ENCODE measurements at regions of chr12 and their contacts with region 1.

Region 1: DNA sequence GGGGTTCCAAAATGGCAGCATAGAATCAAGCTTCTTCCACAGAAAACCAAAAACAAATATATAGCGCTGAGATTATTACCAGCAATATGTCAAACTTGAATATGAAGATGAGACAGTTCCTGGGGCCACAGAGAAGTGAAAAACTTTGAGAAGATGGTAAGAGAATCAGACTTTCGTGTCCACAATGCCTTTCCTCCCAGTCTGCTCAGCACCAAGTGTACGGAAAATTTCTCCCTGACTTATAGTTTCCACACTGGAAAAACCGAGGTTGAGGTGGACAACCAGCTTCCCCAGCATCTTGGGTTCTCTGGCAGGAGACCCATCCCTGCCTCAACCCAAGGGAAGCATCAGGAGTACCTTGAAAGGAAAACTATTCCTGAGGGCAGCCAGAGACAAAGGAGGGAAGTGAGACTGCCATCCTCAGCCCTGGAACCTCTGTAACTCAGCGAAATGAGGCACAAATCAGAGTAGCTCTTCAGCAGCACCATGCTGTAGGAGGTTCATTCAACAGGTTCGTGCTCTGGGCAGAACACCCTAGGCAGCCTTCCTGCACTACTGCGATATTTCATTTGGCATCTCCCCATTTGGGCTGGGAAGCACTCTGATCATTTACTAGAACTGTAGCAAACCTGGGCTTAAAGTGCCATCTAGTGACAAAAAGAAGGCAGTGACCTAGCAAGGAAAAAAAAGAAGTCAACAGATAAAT is 52.4 kb upstream of the CAPRIN2 start:
- DNase-seq: peak; percentile 86
- H3K4me3 ChIP-seq: no peak overlapping the region
- H3K27ac ChIP-seq: no peak overlapping the region
- H3K4me1 ChIP-seq: no peaks in the 10 kb centered on the region
- H3K27me3 ChIP-seq: no peaks in the 10 kb centered on the region
- CTCF ChIP-seq: peak; percentile 86

Region 2: DNA sequence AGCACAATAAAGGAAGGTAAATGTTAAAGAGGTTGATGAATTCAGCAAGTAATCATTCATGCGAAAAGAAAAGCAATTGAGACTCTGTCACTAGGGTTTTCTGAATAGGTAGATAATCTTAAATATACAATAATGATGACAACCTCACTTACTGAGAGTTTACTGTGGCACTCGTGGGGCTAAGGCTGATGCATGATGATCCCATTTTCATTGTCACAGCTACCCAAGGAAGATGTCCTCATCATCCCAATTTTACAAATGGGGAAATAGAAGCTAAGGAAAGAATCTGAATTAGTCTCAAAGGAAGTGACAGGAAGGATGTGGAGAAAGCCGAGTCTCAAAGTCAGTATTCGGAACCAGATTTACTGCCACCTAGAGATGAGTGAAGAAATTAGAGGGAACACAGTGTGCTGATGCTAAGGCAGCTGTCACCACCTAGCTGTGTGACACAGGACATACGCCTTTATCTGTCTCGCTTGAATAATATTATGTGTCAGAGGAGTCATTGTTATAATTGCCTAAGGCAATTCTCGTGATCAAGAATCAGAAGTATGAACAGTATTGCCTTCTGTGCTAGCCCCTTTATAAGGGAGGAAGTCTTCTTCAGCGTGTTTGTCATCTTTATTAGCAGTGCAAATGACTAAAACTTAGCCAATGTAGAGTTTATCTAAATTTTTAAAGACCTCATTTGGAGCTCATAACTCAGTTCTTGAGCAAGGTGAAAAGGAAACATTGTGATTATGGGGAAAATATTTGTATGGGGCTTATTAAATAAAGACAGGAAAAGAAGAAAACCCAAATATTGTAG is 1489.4 kb before region 1 on chr12:
- CTCF ChIA-PET with region 1: no interaction called
- POLR2A ChIA-PET with region 1: no interaction called
- intact Hi-C with region 1: loop called (anchors 10 kb)
- DNase-seq: peak; percentile 84
- H3K4me3 ChIP-seq: no peak overlapping the region
- H3K27ac ChIP-seq: no peak overlapping the region
- H3K4me1 ChIP-seq: peaks cover 6% of the 10 kb centered on the region
- H3K27me3 ChIP-seq: no peaks in the 10 kb centered on the region
- CTCF ChIP-seq: peak; percentile 97

Region 3: GRCh38 chr12:29519585-29520182 is 1287.5 kb before region 1 on chr12:
- CTCF ChIA-PET with region 1: no interaction called
- POLR2A ChIA-PET with region 1: no interaction called
- intact Hi-C with region 1: loop called (anchors 2 kb)
- DNase-seq: peak; percentile 66
- H3K4me3 ChIP-seq: no peak overlapping the region
- H3K27ac ChIP-seq: no peak overlapping the region
- H3K4me1 ChIP-seq: no peaks in the 10 kb centered on the region
- H3K27me3 ChIP-seq: no peaks in the 10 kb centered on the region
- CTCF ChIP-seq: peak; percentile 71

Region 4: GRCh38 chr12:30286345-30286926 is 520.7 kb before region 1 on chr12:
- CTCF ChIA-PET with region 1: no interaction called
- POLR2A ChIA-PET with region 1: no interaction called
- intact Hi-C with region 1: loop called (anchors 10 kb)
- DNase-seq: peak; percentile 59
- H3K4me3 ChIP-seq: no peak overlapping the region
- H3K27ac ChIP-seq: no peak overlapping the region
- H3K4me1 ChIP-seq: no peaks in the 10 kb centered on the region
- H3K27me3 ChIP-seq: peaks cover 8% of the 10 kb centered on the region
- CTCF ChIP-seq: peak; percentile 71

Region 5: DNA sequence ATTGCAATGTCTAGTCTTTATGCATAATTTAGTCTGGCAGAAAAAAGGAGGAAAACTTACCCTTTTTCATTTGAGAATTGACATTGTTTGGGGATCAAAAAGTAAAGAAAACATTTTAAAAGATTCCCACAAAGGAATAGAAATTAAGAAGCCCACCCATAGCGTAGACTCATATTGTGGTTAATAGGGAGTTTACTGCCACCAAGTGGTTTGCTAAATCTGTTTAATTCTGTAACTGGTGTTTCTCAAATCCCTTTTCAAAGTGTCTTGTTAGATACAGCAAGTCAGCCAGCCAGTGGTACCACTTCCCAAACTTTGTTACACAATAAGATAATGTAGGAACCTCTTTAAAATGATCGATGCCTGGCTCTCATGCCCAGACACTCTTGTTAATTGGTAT is 291.8 kb before region 1 on chr12:
- CTCF ChIA-PET with region 1: no interaction called
- POLR2A ChIA-PET with region 1: no interaction called
- intact Hi-C with region 1: loop called (anchors 5 kb)
- DNase-seq: peak; percentile 47
- H3K4me3 ChIP-seq: no peak overlapping the region
- H3K27ac ChIP-seq: no peak overlapping the region
- H3K4me1 ChIP-seq: peaks cover 10% of the 10 kb centered on the region
- H3K27me3 ChIP-seq: no peaks in the 10 kb centered on the region
- CTCF ChIP-seq: peak; percentile 58

Region 6: DNA sequence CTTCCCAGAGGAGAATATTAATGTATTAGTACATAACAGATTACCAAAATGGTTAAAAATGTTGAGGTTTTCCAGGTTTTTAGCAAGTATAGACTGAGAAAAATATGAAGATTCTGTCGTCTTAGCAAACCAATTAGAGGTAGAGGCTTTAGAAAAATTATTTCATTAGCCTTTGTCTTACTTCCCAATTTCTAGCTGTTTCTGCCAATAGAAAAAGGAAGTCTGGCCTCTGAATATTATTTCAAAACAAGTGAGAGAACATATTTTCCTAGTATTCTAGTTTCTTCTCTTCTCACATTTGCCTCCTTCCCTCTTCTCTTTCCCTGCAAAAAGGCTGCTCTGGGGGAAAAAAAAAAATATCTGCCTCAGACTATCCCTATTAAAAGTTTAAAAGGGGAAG is 127.9 kb before region 1 on chr12:
- CTCF ChIA-PET with region 1: no interaction called
- POLR2A ChIA-PET with region 1: no interaction called
- intact Hi-C with region 1: no loop called
- DNase-seq: no peak
- H3K4me3 ChIP-seq: no peak overlapping the region
- H3K27ac ChIP-seq: no peak overlapping the region
- H3K4me1 ChIP-seq: no peaks in the 10 kb centered on the region
- H3K27me3 ChIP-seq: no peaks in the 10 kb centered on the region
- CTCF ChIP-seq: no peak

Region 7: DNA sequence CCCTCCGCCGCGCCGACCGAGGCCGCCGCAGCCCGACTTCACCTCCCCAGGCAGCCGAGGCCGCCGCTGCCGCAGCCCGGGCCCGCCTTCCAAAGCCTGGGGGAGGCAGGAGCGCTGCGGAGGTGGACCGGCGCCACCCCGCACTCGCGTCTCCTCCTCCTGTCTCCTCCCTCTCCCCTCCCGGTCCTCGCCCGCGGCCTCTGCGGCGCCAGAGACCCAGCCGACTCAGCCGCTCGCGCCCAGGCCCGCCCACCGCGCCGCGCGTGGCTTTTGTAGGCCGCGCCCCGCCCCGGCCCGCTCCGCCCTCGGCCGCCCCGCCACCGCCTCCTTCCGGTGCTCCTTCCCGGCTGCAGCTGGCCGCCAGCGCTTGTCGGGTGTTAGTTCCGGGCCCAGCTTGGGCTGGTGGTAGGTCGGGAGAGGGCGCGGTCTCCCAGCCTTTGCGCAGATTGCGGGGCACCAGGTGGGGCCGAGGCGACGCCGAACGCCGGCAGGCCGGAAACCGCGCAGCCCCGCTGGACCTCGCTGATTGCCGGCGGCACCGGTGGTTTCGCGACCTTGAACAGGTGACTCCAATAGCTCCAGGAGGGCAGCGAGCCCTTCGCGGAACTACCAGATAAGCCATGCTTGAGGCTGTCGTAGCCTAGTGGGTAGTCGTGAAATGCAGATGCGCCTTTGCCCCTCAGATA is 52.3 kb before region 1 on chr12 and contains the start of gene CAPRIN2:
- CTCF ChIA-PET with region 1: no interaction called
- POLR2A ChIA-PET with region 1: no interaction called
- intact Hi-C with region 1: loop called (anchors 2 kb)
- DNase-seq: peak; percentile 97
- H3K4me3 ChIP-seq: peak within 1 kb of the TSS; percentile 83
- H3K27ac ChIP-seq: peak within 1 kb of the TSS; percentile 61
- H3K4me1 ChIP-seq: peaks cover 15% of the 10 kb centered on the region
- H3K27me3 ChIP-seq: no peaks in the 10 kb centered on the region
- CTCF ChIP-seq: peak; percentile 45
- total RNA-seq, gene CAPRIN2: 16.4 and 16.7 TPM in 2 replicates

Region 8: DNA sequence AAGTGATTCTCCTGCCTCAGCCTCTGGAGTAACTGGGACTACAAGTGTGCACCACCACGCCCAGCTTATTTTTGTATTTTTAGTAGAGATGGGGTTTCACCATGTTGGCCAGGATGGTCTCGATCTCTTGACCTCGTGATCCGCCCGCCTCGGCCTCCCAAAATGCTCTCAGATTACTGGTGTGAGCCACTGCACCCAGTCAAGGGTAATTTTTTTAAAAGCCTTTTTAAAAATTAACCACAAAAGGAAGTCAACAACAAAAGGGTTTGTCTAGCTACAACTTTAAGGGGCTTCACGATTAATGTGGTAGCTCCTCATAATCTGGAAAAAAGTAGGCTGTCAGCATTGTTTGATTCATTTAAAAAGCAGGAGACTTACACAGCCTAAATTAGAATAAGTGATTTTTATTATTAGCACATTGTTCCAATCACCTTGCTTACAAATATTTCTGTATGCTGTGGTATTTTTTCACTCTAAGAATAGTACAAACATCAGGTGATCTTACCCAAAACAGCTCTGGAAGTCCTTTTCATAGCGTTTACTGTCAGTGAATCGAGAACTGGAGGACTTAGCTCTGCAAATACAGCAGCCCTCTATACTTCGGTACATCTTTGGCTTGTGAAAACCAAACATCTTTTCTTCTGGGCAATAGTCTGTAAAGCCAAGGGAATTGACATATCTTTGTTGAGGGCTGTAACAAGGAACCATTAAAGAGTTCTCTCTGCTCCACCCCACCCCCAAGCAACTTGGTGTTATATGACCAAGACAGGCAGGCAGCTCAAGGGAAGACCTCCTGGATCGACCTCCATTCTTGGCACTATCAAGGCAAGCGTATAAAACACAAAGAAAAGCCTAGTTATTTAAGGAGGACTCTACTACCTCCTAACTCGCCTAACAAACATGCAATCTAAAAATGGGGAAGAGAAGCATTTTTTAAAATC is 490.7 kb after region 1 on chr12:
- CTCF ChIA-PET with region 1: no interaction called
- POLR2A ChIA-PET with region 1: no interaction called
- intact Hi-C with region 1: no loop called
- DNase-seq: no peak
- H3K4me3 ChIP-seq: no peak overlapping the region
- H3K27ac ChIP-seq: no peak overlapping the region
- H3K4me1 ChIP-seq: no peaks in the 10 kb centered on the region
- H3K27me3 ChIP-seq: no peaks in the 10 kb centered on the region
- CTCF ChIP-seq: no peak